CD4-positive, alpha-beta memory T cell (primary cell): ENCODE measurements at regions of chr2 and their contacts with region 1.

Region 1: GRCh38 chr2:24084386-24085361 is at the start of gene TP53I3:
- DNase-seq: peak; percentile 75 to 85 (median 78)
- H3K4me3 ChIP-seq: peak within 1 kb of the TSS; percentile 52 to 57
- H3K4me3 Mint-ChIP-seq: peak within 1 kb of the TSS; percentile 85 to 92 (median 88)
- H3K27ac ChIP-seq: peak within 1 kb of the TSS; percentile 27
- H3K27ac Mint-ChIP-seq: peak within 1 kb of the TSS in 6 of 7 donors; percentile 74 to 89 (median 82)
- H3K4me1 ChIP-seq: peaks cover 14% of the 10 kb centered on the region
- H3K4me1 Mint-ChIP-seq: peaks cover 11 to 14% (median 13%) of the 10 kb centered on the region in 4 donors
- H3K27me3 ChIP-seq: no peaks in the 10 kb centered on the region
- H3K27me3 Mint-ChIP-seq: no peaks in the 10 kb centered on the region
- total RNA-seq, gene TP53I3: 0.20 to 0.47 TPM

Region 2: GRCh38 chr2:23824777-23825212 is 259.9 kb before region 1 on chr2:
- CTCF ChIA-PET with region 1: interaction called, 108 read pairs
- POLR2A ChIA-PET with region 1: interaction called, 9 read pairs
- intact Hi-C with region 1: loop called (anchors 1 kb)
- DNase-seq: peak in 4 of 5 donors; percentile 45 to 63 (median 54)
- H3K4me3 ChIP-seq: no peak overlapping the region
- H3K4me3 Mint-ChIP-seq: no peak overlapping the region
- H3K27ac ChIP-seq: no peak overlapping the region
- H3K27ac Mint-ChIP-seq: no peak overlapping the region
- H3K4me1 ChIP-seq: no peaks in the 10 kb centered on the region
- H3K4me1 Mint-ChIP-seq: peaks cover 0 to 4% (median 0%) of the 10 kb centered on the region in 4 donors
- H3K27me3 ChIP-seq: no peaks in the 10 kb centered on the region
- H3K27me3 Mint-ChIP-seq: no peaks in the 10 kb centered on the region

Region 3: DNA sequence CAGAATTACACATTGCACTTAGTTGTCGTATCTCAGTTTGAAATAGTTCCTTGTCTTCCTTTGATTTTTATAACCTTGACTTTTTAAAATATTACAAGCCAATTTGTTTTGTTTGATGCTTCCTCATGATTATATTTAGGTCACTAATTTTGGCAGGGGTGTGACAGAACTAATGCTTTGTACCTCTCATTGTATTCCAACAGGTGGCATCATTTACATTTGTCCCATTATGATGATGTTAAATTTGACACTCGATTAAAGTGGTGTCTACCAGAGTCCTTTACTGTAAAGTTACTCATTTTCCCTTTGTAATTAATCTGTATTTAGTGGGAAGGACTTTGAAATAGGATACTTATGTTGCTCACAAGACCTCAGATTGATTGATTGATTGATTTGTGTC is 96.3 kb before region 1 on chr2:
- CTCF ChIA-PET with region 1: interaction called, 8 read pairs
- POLR2A ChIA-PET with region 1: no interaction called
- intact Hi-C with region 1: loop called (anchors 1 kb)
- DNase-seq: peak in 4 of 5 donors; percentile 16 to 27 (median 17)
- H3K4me3 ChIP-seq: no peak overlapping the region
- H3K4me3 Mint-ChIP-seq: no peak overlapping the region
- H3K27ac ChIP-seq: no peak overlapping the region
- H3K27ac Mint-ChIP-seq: peak overlapping the region in 1 of 7 donors; percentile 50
- H3K4me1 ChIP-seq: no peaks in the 10 kb centered on the region
- H3K4me1 Mint-ChIP-seq: peaks cover 0 to 3% (median 0%) of the 10 kb centered on the region in 4 donors
- H3K27me3 ChIP-seq: no peaks in the 10 kb centered on the region
- H3K27me3 Mint-ChIP-seq: no peaks in the 10 kb centered on the region

Region 4: GRCh38 chr2:24065341-24065740 is 19.3 kb before region 1 on chr2:
- CTCF ChIA-PET with region 1: interaction called, 16 read pairs
- POLR2A ChIA-PET with region 1: no interaction called
- intact Hi-C with region 1: no loop called
- DNase-seq: no peak
- H3K4me3 ChIP-seq: no peak overlapping the region
- H3K4me3 Mint-ChIP-seq: no peak overlapping the region
- H3K27ac ChIP-seq: no peak overlapping the region
- H3K27ac Mint-ChIP-seq: no peak overlapping the region
- H3K4me1 ChIP-seq: no peaks in the 10 kb centered on the region
- H3K4me1 Mint-ChIP-seq: peaks cover 0 to 5% (median 0%) of the 10 kb centered on the region in 4 donors
- H3K27me3 ChIP-seq: no peaks in the 10 kb centered on the region
- H3K27me3 Mint-ChIP-seq: peaks cover 0 to 3% of the 10 kb centered on the region in 2 donors

Region 5: DNA sequence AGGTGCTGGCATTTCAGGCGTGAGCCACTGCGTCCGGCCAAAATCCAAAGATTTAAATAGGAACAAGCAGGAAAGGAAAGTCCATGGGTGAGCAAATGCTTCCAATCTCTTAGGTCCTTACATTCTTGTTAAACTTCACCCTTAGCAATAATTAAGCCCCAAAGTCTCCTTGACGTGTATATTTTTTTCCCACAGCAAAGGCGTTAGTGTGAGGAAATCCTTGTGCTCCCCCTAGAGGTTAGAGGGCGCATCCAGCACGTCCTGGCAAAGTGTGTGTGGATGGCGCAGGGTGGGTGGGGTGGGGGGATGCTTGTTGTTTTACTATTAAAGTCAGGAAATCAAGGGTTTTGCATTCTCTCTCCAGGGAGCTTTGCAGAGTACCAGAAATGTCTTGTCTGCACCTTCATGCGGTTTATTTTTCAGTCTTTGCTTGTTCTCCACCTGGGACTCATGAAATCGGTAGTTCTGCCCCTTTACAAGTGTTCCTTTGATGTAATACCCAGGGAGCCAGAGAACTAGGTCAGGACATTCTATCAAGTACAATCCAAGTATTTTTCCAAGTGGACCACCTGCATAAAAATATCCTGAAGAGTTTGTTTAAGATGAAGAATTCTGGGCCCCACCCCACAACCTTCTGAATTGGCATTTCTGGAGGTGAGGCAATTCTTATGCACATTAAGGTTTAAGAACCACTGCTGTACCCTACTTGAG is 297.8 kb after region 1 on chr2:
- CTCF ChIA-PET with region 1: no interaction called
- POLR2A ChIA-PET with region 1: no interaction called
- intact Hi-C with region 1: loop called (anchors 1 kb)
- DNase-seq: peak in 4 of 5 donors; percentile 60 to 68 (median 64)
- H3K4me3 ChIP-seq: no peak overlapping the region
- H3K4me3 Mint-ChIP-seq: no peak overlapping the region
- H3K27ac ChIP-seq: no peak overlapping the region
- H3K27ac Mint-ChIP-seq: no peak overlapping the region
- H3K4me1 ChIP-seq: no peaks in the 10 kb centered on the region
- H3K4me1 Mint-ChIP-seq: peaks cover 0 to 2% (median 0%) of the 10 kb centered on the region in 4 donors
- H3K27me3 ChIP-seq: no peaks in the 10 kb centered on the region
- H3K27me3 Mint-ChIP-seq: peaks cover 0 to 2% of the 10 kb centered on the region in 2 donors